ENCODE measurements at regions of chr3 and their contacts with region 1.

Region 1: GRCh38 chr3:81666493-81667121 is 94.8 kb downstream of the GBE1 start:
- DNase-seq: peak; percentile 51
- ATAC-seq: peak; percentile 62
- H3K4me3 ChIP-seq: no peak overlapping the region
- H3K27ac ChIP-seq: no peak overlapping the region
- H3K4me1 ChIP-seq: no peaks in the 10 kb centered on the region
- H3K27me3 ChIP-seq: no peaks in the 10 kb centered on the region
- CTCF ChIP-seq: peak; percentile 91

Region 2: DNA sequence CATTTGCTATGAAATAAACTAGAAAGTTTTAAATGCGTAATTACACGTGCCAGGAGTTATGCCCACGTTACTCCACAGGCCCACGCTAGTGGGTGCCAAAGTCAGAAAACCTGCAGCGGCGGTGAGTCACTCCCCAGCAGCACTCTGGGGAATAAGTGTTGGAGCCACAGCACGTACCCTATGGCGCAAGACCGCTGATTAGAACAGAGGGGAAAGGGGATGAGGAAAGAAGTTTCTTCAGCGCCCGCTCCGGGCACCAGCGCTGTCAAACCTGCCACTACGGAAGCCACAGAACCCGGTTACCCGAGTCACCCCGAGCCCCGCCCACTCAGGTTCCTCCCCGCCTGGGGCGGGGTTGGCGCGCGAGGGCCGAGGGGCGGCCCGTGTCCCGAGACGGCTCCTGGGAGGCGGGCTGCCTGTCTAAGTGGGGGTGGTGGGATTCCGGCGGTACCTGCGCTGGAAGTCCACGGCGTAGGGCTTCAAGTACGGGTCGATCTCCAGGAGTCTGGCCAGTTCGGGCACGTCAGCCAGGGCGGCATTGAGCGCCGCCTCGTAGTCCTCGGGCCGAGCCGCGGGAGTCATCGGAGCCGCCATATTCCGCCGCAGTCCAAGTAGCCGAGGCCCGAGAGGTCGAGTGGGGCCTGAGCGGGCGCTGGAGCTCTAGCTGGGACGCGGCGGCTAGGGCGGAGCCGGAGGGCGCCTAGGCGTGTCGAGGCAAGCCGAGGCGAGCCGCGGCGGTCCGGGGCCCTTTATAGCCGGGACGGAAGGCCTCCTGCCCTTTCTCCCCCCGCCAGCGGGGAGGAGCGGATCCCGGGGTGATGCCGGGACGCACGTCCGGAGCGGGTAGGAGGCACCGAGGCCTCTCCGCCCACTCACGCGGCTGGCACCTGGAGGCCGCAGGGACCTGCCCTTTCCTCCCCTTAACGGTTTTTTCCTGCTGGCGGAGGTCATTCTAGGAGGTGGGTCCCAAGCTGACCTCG is 94.6 kb after region 1 on chr3 and contains the start of gene GBE1:
- CTCF ChIA-PET with region 1: no interaction called
- POLR2A ChIA-PET with region 1: interaction called, 4 read pairs
- intact Hi-C with region 1: loop called (anchors 2 kb)
- DNase-seq: peak; percentile 96
- ATAC-seq: peak; percentile 87
- H3K4me3 ChIP-seq: peak within 1 kb of the TSS; percentile 69
- H3K27ac ChIP-seq: peak within 1 kb of the TSS; percentile 96
- H3K4me1 ChIP-seq: peaks cover 27% of the 10 kb centered on the region
- H3K27me3 ChIP-seq: no peaks in the 10 kb centered on the region
- CTCF ChIP-seq: peak; percentile 59
- total RNA-seq, gene GBE1: 56.6 and 57.7 TPM in 2 replicates

Region 3: DNA sequence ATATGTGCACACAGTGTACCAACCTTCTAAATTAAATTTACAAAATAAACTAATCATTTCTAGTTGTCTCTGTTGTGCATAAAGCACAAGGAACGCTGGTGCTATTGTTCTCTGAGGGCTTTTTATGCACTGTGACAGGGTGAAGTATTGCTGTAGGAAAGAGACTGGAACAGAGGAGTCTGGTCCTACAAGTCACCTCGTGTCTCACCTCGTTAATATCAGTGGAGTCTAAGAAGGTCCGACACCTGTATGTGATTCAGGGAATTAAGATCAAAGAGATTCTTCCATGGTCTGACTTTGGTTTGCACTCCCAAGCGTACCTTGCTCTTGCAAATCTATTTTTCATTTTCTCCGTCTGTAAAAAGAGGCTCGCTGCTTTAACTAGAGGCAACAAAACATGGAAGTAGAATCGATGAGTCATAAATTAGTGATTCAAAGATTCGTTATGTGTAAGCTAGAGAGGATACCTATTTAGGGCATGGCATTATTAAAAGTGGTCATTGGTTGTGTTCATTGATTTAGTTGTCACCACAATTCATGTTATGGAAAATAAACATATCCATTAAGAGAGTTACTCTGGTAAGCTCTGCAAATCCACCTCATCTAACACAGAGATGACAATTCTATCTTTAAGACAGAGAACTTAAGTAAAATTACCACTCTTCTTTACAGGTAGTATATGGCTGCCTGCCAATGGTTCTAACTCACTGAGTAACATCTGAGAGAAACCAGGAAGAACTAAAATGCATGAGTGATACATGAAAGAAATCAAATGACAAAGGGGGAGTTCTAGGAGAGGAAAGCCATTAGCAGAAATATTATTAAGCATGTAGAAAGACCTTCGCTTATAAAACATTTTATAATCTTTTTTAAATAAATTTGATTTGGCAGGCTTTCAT is 314.2 kb after region 1 on chr3:
- CTCF ChIA-PET with region 1: no interaction called
- POLR2A ChIA-PET with region 1: no interaction called
- intact Hi-C with region 1: loop called (anchors 5 kb)
- DNase-seq: peak; percentile 55
- ATAC-seq: no peak; the same call in 1 of the 2 replicates
- H3K4me3 ChIP-seq: no peak overlapping the region
- H3K27ac ChIP-seq: no peak overlapping the region
- H3K4me1 ChIP-seq: no peaks in the 10 kb centered on the region; the same call in 1 of the 2 replicates
- H3K27me3 ChIP-seq: no peaks in the 10 kb centered on the region
- CTCF ChIP-seq: no peak

Region 4: DNA sequence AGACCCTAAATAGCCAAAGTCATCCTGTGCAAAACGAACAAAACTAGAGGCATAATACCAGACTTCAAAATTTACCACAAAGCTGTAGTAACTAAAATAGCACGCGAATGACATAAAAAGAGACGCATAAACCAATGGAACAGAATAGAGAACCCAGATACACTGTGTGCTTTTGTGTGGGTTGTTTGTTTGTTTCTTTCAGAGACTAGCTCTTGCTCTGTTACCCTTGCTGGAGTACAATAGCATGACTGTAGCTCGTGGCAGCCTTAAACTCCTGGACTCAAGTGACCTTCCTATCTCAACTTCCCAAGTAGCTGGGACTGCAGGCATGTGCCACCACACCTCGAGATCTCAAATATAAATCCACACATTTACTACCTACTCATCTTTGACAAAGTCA is 1409.4 kb after region 1 on chr3:
- CTCF ChIA-PET with region 1: no interaction called
- POLR2A ChIA-PET with region 1: interaction called, 10 read pairs
- intact Hi-C with region 1: no loop called
- DNase-seq: no peak
- ATAC-seq: no peak
- H3K4me3 ChIP-seq: no peak overlapping the region
- H3K27ac ChIP-seq: no peak overlapping the region
- H3K4me1 ChIP-seq: no peaks in the 10 kb centered on the region
- H3K27me3 ChIP-seq: no peaks in the 10 kb centered on the region
- CTCF ChIP-seq: no peak

Measured in PC-3 (cell line).